ENCODE measurements at regions of chr11 and their contacts with region 1.

Region 1: DNA sequence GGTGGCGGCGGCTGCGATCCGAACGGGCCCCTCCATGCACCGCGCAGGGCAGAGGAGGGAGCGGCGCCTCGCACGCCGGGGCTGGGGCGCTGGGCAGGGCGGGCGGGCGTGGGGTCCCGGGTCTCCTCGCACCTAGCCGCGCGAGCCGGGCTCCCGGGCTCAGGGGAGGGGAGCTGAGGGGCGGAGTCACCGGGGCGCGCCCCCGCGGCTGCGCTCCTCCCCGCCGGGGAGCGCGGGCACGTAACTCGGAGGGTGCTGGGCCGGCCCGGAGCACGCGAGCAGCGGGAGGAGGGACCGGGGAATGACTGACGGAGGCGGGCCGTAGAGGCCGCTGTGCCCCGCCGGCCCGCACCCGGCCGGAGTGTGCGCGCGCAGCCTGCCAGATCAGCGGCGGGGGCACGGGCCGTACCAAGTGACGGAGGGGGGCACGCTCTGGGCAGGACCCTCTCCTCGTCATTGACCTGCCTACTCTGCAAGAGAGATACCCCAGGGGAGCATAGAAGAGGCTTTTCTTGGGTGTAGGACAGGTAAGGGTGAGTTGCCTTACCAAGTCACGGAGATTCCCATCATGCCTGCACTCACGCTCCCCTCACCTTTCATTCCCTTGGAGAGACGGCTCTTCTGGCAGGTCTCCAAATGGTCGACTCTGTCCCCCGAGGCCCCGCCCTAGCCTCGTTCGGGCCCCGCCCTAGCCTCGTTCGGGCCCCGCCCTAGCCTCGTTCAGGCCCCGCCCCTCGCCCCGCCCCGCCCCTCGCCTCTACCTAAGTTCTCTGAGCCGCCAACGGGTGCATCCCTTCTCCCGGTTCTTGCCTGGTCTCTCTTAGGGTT is at the start of gene CDON:
- DNase-seq: peak; percentile 100
- H3K4me3 ChIP-seq: peak within 1 kb of the TSS; percentile 69 to 78
- H3K27ac ChIP-seq: peak within 1 kb of the TSS; percentile 67 to 98; a peak in 3 of 4 replicates
- H3K4me1 ChIP-seq: peaks cover 8 to 14% of the 10 kb centered on the region in 2 experiments; a peak in 3 of 4 replicates
- H3K27me3 ChIP-seq: no peaks in the 10 kb centered on the region
- CTCF ChIP-seq: no peak
- EP300 ChIP-seq: peak in 1 of 2 experiments; percentile 73; a peak in 1 of 4 replicates
- RAD21 ChIP-seq: peak; percentile 50
- polyA plus RNA-seq, gene CDON: 3.7 and 4.2 TPM in 2 replicates

Region 2: DNA sequence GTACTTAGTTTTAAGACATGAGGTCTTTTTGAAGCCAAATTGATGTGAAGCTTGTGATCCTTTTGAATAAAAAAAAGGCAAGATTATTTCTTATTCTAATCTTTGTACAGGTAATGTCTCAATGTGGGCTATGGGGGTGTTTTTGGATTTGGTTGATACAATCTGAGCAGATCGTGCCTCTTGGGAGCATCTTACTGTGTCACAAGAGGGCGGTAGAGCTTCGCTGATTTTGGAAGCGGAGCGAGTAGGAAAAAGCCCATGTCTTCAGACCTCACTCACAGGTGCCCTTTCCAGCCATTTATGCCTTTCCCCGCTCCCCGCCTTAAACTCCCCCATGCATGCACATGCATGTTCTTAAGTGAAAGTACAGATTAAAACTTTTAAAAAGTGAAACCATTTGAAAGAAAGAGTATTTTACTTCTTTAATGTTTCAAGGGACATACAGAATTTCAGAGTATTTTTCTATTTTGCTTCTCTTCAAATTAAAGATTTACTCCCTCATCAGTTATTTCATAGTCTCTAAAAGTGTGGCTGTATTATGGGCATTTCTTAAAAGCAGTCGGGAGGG is 139.8 kb before region 1 on chr11:
- CTCF ChIA-PET with region 1: interaction called, 34 read pairs
- POLR2A ChIA-PET with region 1: interaction called, 5 read pairs
- DNase-seq: peak; percentile 74
- H3K4me3 ChIP-seq: no peak overlapping the region; a peak in 1 of 4 replicates
- H3K27ac ChIP-seq: no peak overlapping the region
- H3K4me1 ChIP-seq: peaks cover 0 to 26% of the 10 kb centered on the region in 2 experiments; a peak in 1 of 4 replicates
- H3K27me3 ChIP-seq: peaks cover 38% of the 10 kb centered on the region; the same call in 1 of the 2 replicates
- CTCF ChIP-seq: peak; percentile 90
- EP300 ChIP-seq: no peak
- RAD21 ChIP-seq: peak; percentile 98

Region 3: DNA sequence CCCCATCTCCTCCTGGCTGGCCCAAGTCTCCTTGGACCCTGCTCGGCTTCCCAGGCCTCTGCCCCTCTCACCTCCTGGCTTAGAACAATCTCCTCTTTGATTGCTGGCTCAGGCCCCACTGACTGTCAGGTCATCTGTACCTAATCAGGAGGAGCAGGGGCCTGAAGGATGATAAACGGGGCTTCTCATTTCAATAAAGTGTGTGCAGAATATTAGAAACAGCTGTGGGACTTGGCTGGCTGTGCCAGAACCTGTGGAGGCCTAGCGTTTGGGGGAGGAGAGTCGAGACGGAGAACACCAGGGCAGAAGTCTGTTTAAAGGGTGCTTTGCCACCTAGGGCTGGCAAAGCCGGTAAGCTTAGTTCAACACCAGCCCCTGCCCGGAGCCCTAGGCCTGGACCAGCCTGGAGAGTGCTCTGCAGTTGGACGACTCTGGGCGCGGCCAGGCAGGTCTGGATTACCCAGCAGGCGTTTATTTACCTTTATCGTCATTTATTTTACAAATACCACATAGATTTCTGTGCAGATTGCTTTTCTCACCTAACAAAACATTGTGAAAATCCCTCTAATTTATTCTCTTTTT is 127.2 kb before region 1 on chr11:
- CTCF ChIA-PET with region 1: interaction called, 55 read pairs
- POLR2A ChIA-PET with region 1: no interaction called
- DNase-seq: peak; percentile 88
- H3K4me3 ChIP-seq: peak overlapping the region in 1 of 2 experiments; percentile 9; a peak in 1 of 4 replicates
- H3K27ac ChIP-seq: peak overlapping the region in 1 of 2 experiments; percentile 77; a peak in 2 of 4 replicates
- H3K4me1 ChIP-seq: peaks cover 0 to 24% of the 10 kb centered on the region in 2 experiments; a peak in 2 of 4 replicates
- H3K27me3 ChIP-seq: no peaks in the 10 kb centered on the region
- CTCF ChIP-seq: no peak
- EP300 ChIP-seq: peak; percentile 63 to 94; a peak in 3 of 4 replicates
- RAD21 ChIP-seq: peak; percentile 31

Region 4: GRCh38 chr11:125950696-125951651 is 111.9 kb before region 1 on chr11:
- CTCF ChIA-PET with region 1: interaction called, 13 read pairs
- POLR2A ChIA-PET with region 1: interaction called, 8 read pairs
- DNase-seq: peak; percentile 89
- H3K4me3 ChIP-seq: no peak overlapping the region; a peak in 1 of 4 replicates
- H3K27ac ChIP-seq: peak overlapping the region in 1 of 2 experiments; percentile 97; a peak in 2 of 4 replicates
- H3K4me1 ChIP-seq: peaks cover 0 to 51% of the 10 kb centered on the region in 2 experiments; a peak in 2 of 4 replicates
- H3K27me3 ChIP-seq: no peaks in the 10 kb centered on the region
- CTCF ChIP-seq: no peak
- EP300 ChIP-seq: peak in 1 of 2 experiments; percentile 85; a peak in 2 of 4 replicates
- RAD21 ChIP-seq: no peak; the same call in 1 of the 2 replicates

Region 5: GRCh38 chr11:126102436-126102981 is 39.6 kb after region 1 on chr11:
- CTCF ChIA-PET with region 1: interaction called, 21 read pairs
- POLR2A ChIA-PET with region 1: interaction called, 3 read pairs
- DNase-seq: peak; percentile 68
- H3K4me3 ChIP-seq: no peak overlapping the region
- H3K27ac ChIP-seq: peak overlapping the region in 1 of 2 experiments; percentile 93; a peak in 2 of 4 replicates
- H3K4me1 ChIP-seq: peaks cover 6 to 70% of the 10 kb centered on the region in 2 experiments; a peak in 3 of 4 replicates
- H3K27me3 ChIP-seq: no peaks in the 10 kb centered on the region
- CTCF ChIP-seq: no peak
- EP300 ChIP-seq: peak in 1 of 2 experiments; percentile 31; a peak in 1 of 4 replicates
- RAD21 ChIP-seq: no peak

Region 6: DNA sequence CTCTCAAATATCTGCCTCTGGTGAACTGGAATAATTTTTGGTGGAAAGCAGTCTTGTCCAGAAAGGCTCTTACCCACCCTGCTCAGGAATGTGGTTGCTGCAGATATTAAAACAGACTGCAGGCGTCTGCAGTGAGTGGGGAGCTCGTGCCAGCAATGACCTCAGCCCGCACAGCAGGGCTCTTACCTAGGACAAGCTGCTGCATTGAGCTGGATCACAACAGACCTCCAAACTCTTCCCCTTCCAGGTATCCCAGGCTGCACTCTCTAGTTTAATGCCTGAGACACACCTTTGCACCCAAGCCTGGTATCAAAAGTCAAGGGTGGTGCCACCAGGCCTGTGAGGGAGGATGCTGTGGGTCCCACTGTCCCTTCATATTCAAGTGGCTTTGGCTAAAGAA is 69.4 kb after region 1 on chr11:
- CTCF ChIA-PET with region 1: interaction called, 10 read pairs
- POLR2A ChIA-PET with region 1: no interaction called
- DNase-seq: no peak
- H3K4me3 ChIP-seq: no peak overlapping the region
- H3K27ac ChIP-seq: no peak overlapping the region
- H3K4me1 ChIP-seq: peaks cover 13 to 29% of the 10 kb centered on the region in 2 experiments; a peak in 2 of 4 replicates
- H3K27me3 ChIP-seq: peaks cover 1% of the 10 kb centered on the region; the same call in 1 of the 2 replicates
- CTCF ChIP-seq: no peak
- EP300 ChIP-seq: no peak
- RAD21 ChIP-seq: no peak